Adrenal gland (tissue), 19 donors: ENCODE measurements at regions of chr3 and their contacts with region 1.

Region 1: DNA sequence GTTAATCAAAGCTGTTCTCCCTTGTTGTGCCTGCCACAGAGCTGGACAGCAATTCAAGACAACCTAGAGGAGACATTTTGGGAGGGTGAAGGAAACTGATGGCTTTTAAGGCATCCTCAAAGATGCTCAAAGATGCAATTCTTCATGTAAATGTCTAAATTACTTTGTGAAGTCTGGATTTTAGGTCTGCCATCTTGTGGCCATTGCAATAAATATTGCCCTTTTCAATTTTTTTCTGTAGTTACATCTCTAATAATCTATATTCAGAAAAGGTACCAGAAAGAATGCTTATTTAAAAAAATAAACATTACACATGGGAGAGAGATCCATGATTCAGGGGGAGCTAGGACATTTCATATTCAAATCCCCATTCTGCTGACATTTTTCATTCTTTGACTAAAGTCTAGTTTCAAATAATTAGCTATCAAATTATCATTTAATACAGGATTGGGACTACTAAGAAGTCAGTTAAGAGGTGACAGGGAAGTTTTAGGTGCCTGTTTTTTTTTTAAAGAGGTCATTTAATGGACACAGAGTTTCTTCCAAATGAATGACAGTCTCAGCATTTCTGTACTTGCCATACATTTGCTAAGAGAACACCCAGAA is 259.8 kb upstream of the WNT5A start:
- DNase-seq: no peak
- H3K4me3 ChIP-seq: no peak overlapping the region
- H3K27ac ChIP-seq: no peak overlapping the region
- H3K4me1 ChIP-seq: no peaks in the 10 kb centered on the region
- H3K27me3 ChIP-seq: no peaks in the 10 kb centered on the region
- CTCF ChIP-seq: peak; percentile 23 to 56 (median 37)
- POLR2A ChIP-seq: no peak

Region 2: GRCh38 chr3:54853573-54854404 is 893.1 kb before region 1 on chr3:
- intact Hi-C with region 1: loop called in 1 of 2 experiments (anchors 10 kb)
- DNase-seq: peak; percentile 76 to 91 (median 86)
- H3K4me3 ChIP-seq: no peak overlapping the region
- H3K27ac ChIP-seq: no peak overlapping the region
- H3K4me1 ChIP-seq: peaks cover 0 to 20% of the 10 kb centered on the region in 2 donors
- H3K27me3 ChIP-seq: no peaks in the 10 kb centered on the region
- CTCF ChIP-seq: peak; percentile 78 to 91 (median 88)
- POLR2A ChIP-seq: no peak